ENCODE measurements at regions of chr16 and their contacts with region 1.

Region 1: DNA sequence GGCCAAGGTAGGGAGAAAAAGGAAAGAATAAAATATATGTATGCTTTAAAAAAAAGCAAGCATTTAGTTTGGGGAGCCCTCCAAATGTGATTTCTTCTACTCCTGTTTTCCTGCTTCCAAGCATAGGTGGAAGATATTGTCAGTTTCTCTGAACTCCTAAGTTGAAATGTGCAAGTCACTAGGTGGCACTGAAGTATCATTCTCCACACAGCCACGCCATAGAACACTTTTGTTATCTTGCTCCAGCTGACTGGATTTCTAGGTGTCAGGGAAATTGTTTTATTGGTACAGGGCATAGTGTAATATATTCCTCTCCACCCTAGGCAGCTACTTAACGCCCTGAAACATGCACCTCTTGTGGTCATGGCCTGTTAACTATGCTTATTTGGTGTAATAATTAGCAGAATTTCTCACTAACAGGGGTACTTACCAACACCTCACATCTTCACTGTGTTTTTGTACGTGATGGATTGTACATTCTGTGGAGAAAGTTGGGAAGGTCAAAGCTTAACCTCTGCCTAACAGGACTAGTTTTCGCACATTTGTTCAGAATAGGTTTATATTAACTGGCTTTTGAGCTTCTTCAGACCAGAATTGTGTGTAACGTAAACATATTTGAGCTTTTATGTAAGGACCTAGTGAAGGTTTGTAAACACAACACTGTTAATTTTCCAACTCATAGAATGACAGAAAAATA is 69.3 kb downstream of the FTO start:
- DNase-seq: no peak
- H3K4me3 ChIP-seq: no peak overlapping the region
- H3K27me3 ChIP-seq: no peaks in the 10 kb centered on the region
- CTCF ChIP-seq: peak; percentile 66

Region 2: DNA sequence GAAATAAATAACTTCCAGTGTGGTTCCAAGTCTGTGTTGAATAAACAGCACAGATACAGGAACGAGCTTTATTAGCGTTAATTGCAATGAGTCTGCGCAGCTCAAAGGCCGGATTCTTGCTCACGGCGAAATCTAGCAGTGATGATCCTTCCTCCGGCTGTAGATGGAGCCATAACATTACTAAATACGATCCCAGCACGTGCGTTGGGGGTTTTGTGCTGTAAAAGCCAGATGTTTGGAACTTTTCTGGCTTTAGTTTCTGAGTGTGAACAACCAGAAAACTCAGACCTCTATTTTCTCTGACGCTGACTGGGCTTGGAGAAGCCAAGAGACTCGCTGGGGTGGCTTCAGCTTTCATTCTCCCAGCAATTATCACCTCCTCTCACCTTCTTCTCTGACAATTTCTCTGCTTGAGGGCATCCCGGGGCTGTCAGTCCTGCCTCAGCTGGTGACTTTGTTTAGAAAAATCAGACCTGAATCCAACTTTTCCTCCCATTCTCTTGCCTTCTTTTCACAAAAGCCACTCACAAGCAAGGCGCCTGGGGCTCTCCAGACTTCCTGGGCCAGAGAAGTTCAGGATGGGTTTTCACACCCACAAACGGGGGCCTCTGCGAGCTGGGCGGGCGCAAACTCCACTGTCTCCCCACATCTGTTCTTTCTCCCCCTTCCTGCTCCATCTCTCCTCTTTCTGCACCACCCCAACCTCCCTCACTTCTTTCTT is 223.2 kb before region 1 on chr16:
- CTCF ChIA-PET with region 1: interaction called, 12 read pairs
- POLR2A ChIA-PET with region 1: no interaction called
- DNase-seq: peak; percentile 49
- H3K4me3 ChIP-seq: no peak overlapping the region
- H3K27me3 ChIP-seq: peaks cover 18% of the 10 kb centered on the region
- CTCF ChIP-seq: peak; percentile 78

Region 3: DNA sequence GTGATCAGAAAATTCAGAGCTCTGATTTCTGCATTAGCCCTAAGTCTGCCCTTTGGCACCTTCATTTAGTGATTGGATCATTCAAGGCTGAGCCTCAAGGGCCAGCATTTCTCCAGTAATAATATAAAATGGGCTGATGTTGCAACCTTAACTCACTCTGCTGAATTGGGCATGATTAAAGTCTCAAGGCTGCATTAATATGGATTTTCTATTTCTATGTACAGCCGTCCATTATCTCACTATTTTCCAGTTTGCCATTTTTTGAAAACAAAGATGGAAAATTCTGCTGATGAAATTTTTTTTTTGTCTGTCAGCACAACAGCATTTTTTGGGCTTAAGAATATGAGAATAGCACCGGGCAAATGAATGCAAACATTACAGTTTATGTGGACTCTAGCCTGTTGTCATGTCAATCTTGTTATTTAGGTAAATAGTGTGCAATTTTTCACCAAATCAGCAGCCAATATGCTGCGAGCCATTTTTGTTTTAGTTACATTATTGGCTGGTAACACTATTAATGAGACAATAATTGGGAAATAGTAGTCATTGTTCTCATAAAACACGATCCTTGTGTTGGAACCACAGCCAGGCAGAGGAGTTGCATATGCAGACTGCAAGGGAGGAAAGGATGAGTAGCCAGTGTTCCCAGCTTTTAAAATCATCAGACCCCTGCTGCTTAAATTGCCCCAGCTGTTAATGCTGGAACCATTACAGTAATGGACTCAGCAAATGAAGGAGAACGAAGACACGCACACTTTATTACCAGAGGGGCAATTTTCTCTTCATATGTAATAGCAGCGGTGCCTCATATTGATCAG is 58.9 kb before region 1 on chr16:
- CTCF ChIA-PET with region 1: no interaction called
- POLR2A ChIA-PET with region 1: no interaction called
- DNase-seq: no peak
- H3K4me3 ChIP-seq: no peak overlapping the region
- H3K27me3 ChIP-seq: no peaks in the 10 kb centered on the region
- CTCF ChIP-seq: no peak

Region 4: GRCh38 chr16:53743149-53743566 is 30.1 kb before region 1 on chr16:
- CTCF ChIA-PET with region 1: interaction called, 15 read pairs
- POLR2A ChIA-PET with region 1: no interaction called
- DNase-seq: no peak
- H3K4me3 ChIP-seq: no peak overlapping the region
- H3K27me3 ChIP-seq: no peaks in the 10 kb centered on the region
- CTCF ChIP-seq: peak; percentile 65

Region 5: GRCh38 chr16:53892155-53892554 is 118.9 kb after region 1 on chr16:
- CTCF ChIA-PET with region 1: interaction called, 11 read pairs
- POLR2A ChIA-PET with region 1: no interaction called
- DNase-seq: peak; percentile 13
- H3K4me3 ChIP-seq: no peak overlapping the region
- H3K27me3 ChIP-seq: no peaks in the 10 kb centered on the region
- CTCF ChIP-seq: peak; percentile 77